ENCODE measurements at regions of chr3 and their contacts with region 1.

Region 1: DNA sequence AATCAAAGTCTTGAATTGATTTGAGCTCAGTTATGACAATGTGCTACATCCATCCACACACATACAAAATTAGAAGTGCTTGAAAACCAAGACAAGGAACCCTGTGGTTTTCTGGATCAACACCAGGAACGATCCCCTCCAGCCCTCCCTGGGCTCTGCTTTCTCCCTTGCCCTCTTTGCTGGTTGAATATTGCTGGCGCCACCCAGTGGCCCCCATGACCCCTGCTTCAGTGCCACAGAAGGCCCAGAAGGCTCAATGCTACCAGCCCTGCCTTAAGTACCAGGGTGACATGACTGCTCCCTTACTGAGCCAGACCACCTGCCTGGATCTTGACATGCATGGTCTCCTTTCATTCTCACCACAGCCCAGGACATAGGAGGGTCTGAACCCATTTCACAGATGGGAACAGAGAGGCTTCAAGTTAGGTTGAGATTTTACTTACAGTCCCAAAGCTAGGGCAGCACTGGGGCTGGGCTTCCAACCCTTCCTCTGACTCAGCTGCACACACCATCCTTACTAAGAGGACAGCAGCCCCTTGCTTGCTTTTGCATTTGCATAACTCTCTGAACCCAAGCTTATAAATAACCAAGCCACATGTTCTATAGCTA is 15.0 kb downstream of the IL12A start:
- DNase-seq: peak; percentile 36 to 62 (median 47)
- H3K4me3 ChIP-seq: no peak overlapping the region
- H3K4me3 Mint-ChIP-seq: no peak overlapping the region
- H3K27ac ChIP-seq: no peak overlapping the region
- H3K27ac Mint-ChIP-seq: peak overlapping the region in 1 of 7 donors; percentile 50
- H3K4me1 ChIP-seq: peaks cover 2 to 4% of the 10 kb centered on the region in 2 donors
- H3K4me1 Mint-ChIP-seq: peaks cover 14% of the 10 kb centered on the region
- H3K27me3 ChIP-seq: no peaks in the 10 kb centered on the region
- H3K27me3 Mint-ChIP-seq: peaks cover 0 to 4% (median 0%) of the 10 kb centered on the region in 3 donors
- CTCF ChIP-seq: peak; percentile 68

Region 2: GRCh38 chr3:159884661-159885402 is 118.8 kb before region 1 on chr3:
- intact Hi-C with region 1: loop called (anchors 2 to 5 kb)
- DNase-seq: peak; percentile 20 to 63 (median 40)
- H3K4me3 ChIP-seq: no peak overlapping the region
- H3K4me3 Mint-ChIP-seq: no peak overlapping the region
- H3K27ac ChIP-seq: no peak overlapping the region
- H3K27ac Mint-ChIP-seq: no peak overlapping the region
- H3K4me1 ChIP-seq: peaks cover 9 to 10% of the 10 kb centered on the region in 2 donors
- H3K4me1 Mint-ChIP-seq: peaks cover 20% of the 10 kb centered on the region
- H3K27me3 ChIP-seq: no peaks in the 10 kb centered on the region
- H3K27me3 Mint-ChIP-seq: peaks cover 0 to 1% (median 0%) of the 10 kb centered on the region in 3 donors
- CTCF ChIP-seq: peak; percentile 85

Region 3: DNA sequence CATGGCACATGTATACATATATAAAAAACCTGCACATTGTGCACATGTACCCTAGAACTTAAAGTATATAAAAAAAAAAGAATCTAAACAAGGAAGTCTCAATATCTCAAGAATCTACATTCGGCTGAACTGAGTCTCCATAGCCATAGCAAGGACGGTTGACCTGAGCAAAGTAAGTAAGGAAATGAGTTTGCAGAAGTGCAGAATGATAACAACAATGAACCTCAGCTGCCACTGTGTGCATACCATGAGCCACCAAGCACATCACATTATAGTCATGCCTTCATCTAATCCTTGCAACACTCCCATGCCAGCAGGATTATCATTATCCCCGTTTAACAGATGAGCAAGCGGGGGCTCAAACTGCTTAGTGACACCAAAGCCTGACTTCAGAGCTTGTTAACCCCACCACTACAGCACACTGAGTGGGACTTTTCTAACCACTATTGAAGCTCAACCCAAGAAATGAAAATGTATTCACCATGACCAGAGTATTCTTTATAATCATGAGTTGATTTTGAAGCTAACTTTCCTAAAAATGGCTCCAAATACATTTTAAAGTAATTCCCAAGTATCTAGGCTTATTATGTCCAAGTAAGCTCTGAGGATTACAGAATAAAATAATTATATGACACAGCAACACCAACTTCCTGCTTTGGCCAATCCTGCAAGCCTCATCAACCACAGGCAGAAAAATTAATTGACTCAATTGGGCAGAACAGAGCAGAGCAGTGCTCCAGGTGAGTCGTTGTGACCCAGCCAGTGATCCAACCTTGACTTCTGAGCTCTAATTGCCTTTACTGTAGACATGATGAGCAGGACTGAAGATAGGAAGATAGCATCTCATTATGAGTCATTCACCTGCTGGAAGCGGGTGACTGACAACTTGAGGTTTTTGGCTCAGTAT is 62.3 kb before region 1 on chr3:
- intact Hi-C with region 1: no loop called
- DNase-seq: peak in 2 of 3 donors; percentile 32 to 40
- H3K4me3 ChIP-seq: peak overlapping the region in 1 of 3 experiments; percentile 14
- H3K4me3 Mint-ChIP-seq: no peak overlapping the region
- H3K27ac ChIP-seq: peak overlapping the region in 1 of 2 donors; percentile 46
- H3K27ac Mint-ChIP-seq: peak overlapping the region; percentile 58 to 91 (median 83)
- H3K4me1 ChIP-seq: peaks cover 74 to 78% of the 10 kb centered on the region in 2 donors
- H3K4me1 Mint-ChIP-seq: peaks cover 75% of the 10 kb centered on the region
- H3K27me3 ChIP-seq: no peaks in the 10 kb centered on the region
- H3K27me3 Mint-ChIP-seq: peaks cover 0 to 3% (median 0%) of the 10 kb centered on the region in 3 donors
- CTCF ChIP-seq: no peak